ENCODE measurements at regions of chr16 and their contacts with region 1.

Region 1: GRCh38 chr16:89049461-89050118 is 44.1 kb upstream of the ACSF3 start:
- DNase-seq: no peak

Region 2: GRCh38 chr16:88999457-89000206 is 50.0 kb before region 1 on chr16:
- in situ Hi-C with region 1: loop called (anchors 5 kb)
- DNase-seq: no peak

Region 3: DNA sequence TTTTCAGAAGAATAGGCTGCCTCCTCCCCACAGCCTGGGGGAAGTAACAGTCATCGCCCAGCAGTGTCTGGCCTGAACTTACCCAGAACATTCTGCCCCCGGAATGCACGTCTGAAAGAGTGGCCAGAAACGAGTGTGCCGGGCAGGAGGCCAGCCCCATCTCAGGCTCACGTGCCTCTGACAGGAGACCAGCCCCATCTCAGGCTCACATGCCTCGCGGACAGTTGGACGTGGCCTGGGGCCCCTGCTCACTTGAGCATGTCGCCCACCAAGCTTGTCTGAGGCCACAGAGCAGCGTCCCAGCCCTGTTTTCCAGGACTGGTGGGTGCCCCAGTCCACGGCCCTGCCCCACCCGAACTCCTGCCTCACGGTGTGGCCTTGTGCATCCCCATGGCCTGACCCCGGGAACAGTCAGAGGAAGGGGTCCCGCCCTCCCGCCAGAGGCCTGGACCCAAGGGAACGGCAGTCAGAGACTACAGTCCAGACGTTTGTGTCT is 105.6 kb after region 1 on chr16:
- in situ Hi-C with region 1: no loop called
- DNase-seq: no peak